ENCODE measurements at regions of chr5 and their contacts with region 1.

Region 1: DNA sequence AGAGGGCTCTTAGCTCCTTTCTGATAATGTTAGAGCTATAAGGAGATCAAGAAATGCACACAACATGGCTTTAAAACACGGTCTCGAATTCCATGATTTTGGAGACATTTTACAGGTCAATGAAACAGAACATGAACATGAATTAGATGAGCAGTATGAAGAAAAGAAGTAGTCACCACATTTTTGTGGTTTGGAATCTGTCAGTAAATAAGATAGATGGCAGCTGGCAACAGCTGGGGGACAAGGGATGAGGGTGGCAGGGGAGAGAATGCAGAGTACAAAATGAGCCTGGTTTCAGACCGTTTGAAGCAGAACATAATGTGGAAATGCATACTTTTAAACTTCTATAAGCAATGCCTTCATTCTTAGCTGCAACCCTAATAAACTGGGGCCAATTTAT is 107.1 kb downstream of the OXCT1 start:
- DNase-seq: no peak
- H3K4me3 ChIP-seq: no peak overlapping the region
- H3K27ac ChIP-seq: no peak overlapping the region
- H3K4me1 ChIP-seq: no peaks in the 10 kb centered on the region
- H3K27me3 ChIP-seq: no peaks in the 10 kb centered on the region
- CTCF ChIP-seq: no peak
- EP300 ChIP-seq: no peak
- POLR2A ChIP-seq: no peak

Region 2: DNA sequence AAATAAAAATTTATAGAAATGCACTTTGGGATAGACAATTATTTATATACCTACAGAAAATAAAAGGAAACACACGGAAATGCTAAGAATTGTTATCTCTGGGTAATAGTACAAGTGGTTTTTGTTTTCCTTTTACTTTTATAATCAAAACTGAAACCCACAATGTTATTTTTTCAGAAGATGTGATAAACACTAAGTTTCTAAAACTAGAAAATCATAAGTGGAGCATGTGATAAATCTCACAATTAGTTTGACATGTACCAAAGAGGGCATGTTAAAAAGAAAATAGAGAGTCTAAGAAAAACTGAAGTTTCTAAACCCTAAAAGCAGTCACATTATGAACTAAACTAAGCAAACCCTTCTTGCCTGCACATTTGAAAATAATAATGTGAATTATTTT is 46.0 kb after region 1 on chr5:
- in situ Hi-C with region 1: no loop called
- intact Hi-C with region 1: loop called (anchors 2 kb)
- DNase-seq: no peak
- H3K4me3 ChIP-seq: no peak overlapping the region
- H3K27ac ChIP-seq: no peak overlapping the region
- H3K4me1 ChIP-seq: peaks cover 0 to 28% (median 0%) of the 10 kb centered on the region in 4 donors
- H3K27me3 ChIP-seq: no peaks in the 10 kb centered on the region
- CTCF ChIP-seq: no peak
- EP300 ChIP-seq: no peak
- POLR2A ChIP-seq: no peak

Region 3: DNA sequence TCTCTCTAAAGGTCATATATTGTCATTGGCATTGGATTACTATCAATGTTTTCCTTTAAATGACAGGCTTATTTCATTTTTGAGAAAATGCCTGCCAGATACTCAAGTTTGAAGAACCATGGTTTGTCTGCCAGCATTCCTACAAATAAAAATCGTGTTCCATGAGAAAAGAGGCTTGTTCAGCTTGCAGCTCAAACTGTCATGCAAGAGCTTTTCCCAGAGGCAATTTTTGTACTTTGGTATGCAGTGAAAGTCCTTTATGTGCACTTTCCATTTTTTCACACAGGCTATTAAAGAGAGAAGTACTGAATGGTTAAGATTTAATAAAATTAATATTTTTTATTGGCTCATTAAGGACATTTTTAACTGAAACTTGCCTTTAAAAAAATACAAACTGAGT is 272.4 kb after region 1 on chr5:
- in situ Hi-C with region 1: no loop called
- intact Hi-C with region 1: no loop called
- DNase-seq: no peak
- H3K4me3 ChIP-seq: no peak overlapping the region
- H3K27ac ChIP-seq: no peak overlapping the region
- H3K4me1 ChIP-seq: no peaks in the 10 kb centered on the region
- H3K27me3 ChIP-seq: no peaks in the 10 kb centered on the region
- CTCF ChIP-seq: no peak
- EP300 ChIP-seq: no peak
- POLR2A ChIP-seq: no peak

Measured in transverse colon (tissue), 4 donors.